ENCODE measurements at regions of chr4 and their contacts with region 1.

Region 1: GRCh38 chr4:141346144-141346543 is 125.4 kb downstream of the ZNF330 start:
- DNase-seq: peak; percentile 7
- ATAC-seq: no peak
- H3K4me3 ChIP-seq: no peak overlapping the region
- H3K4me3 Mint-ChIP-seq: no peak overlapping the region
- H3K27ac ChIP-seq: no peak overlapping the region
- H3K27ac Mint-ChIP-seq: no peak overlapping the region
- H3K4me1 ChIP-seq: peaks cover 0 to 6% of the 10 kb centered on the region in 2 donors
- H3K4me1 Mint-ChIP-seq: peaks cover 10% of the 10 kb centered on the region
- H3K27me3 ChIP-seq: no peaks in the 10 kb centered on the region
- H3K27me3 Mint-ChIP-seq: peaks cover 9% of the 10 kb centered on the region
- CTCF ChIP-seq: no peak

Region 2: GRCh38 chr4:141711014-141711610 is 365.0 kb after region 1 on chr4:
- CTCF ChIA-PET with region 1: interaction called, 14 read pairs
- POLR2A ChIA-PET with region 1: no interaction called
- intact Hi-C with region 1: no loop called
- DNase-seq: peak; percentile 10
- ATAC-seq: no peak
- H3K4me3 ChIP-seq: no peak overlapping the region
- H3K4me3 Mint-ChIP-seq: no peak overlapping the region
- H3K27ac ChIP-seq: no peak overlapping the region
- H3K27ac Mint-ChIP-seq: no peak overlapping the region
- H3K4me1 ChIP-seq: peaks cover 0 to 8% of the 10 kb centered on the region in 2 donors
- H3K4me1 Mint-ChIP-seq: peaks cover 10% of the 10 kb centered on the region
- H3K27me3 ChIP-seq: no peaks in the 10 kb centered on the region
- H3K27me3 Mint-ChIP-seq: no peaks in the 10 kb centered on the region
- CTCF ChIP-seq: peak; percentile 38

Measured in B cell (primary cell).